Right ventricle myocardium superior (tissue), 1 donor: ENCODE measurements at regions of chr19 and their contacts with region 1.

Region 1: DNA sequence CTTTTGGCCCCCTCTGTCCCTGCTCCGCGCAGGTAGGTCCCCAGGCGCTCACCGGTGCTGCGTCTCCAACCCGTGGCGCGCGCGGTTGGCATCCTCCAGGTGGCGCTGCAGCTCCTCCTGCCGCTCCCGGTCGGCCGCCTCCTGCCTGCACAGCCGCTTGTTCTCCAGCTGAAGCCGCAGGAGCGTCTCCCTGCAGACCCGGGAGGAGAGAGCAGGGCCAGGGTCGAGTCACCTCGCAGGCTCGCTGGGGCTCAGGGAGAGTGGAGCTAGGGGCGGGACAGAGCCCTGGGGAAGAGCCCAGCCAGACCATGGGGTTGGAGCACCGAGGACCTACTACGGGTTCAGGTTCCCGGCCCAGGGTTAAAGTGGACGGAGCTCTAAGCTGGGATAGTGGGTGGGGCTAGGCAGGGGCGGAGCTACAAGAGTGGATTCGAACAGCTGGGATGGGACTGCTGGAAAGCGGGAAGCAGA is 9.3 kb downstream of the HOOK2 start:
- DNase-seq: peak; percentile 93
- ATAC-seq: peak; percentile 88

Region 2: GRCh38 chr19:12801466-12802266 is 35.6 kb after region 1 on chr19 and contains the starts of genes PRDX2 and THSD8:
- intact Hi-C with region 1: loop called (anchors 5 kb)
- DNase-seq: peak; percentile 87
- ATAC-seq: peak; percentile 93
- total RNA-seq, gene PRDX2: 684 TPM
- total RNA-seq, gene THSD8: 1.6 TPM

Region 3: GRCh38 chr19:12847159-12848139 is 81.4 kb after region 1 on chr19:
- intact Hi-C with region 1: loop called (anchors 5 kb)
- DNase-seq: peak; percentile 93
- ATAC-seq: peak; percentile 99